ENCODE measurements at regions of chr1 and their contacts with region 1.

Region 1: GRCh38 chr1:109532365-109533136 is 7.1 kb upstream of the GPR61 start:
- DNase-seq: peak; percentile 93
- ATAC-seq: peak; percentile 93
- H3K4me3 Mint-ChIP-seq: peak overlapping the region; percentile 57
- H3K27ac Mint-ChIP-seq: peak overlapping the region; percentile 90
- H3K4me1 Mint-ChIP-seq: peaks cover 23% of the 10 kb centered on the region
- H3K27me3 Mint-ChIP-seq: no peaks in the 10 kb centered on the region
- CTCF ChIP-seq: peak; percentile 79

Region 2: DNA sequence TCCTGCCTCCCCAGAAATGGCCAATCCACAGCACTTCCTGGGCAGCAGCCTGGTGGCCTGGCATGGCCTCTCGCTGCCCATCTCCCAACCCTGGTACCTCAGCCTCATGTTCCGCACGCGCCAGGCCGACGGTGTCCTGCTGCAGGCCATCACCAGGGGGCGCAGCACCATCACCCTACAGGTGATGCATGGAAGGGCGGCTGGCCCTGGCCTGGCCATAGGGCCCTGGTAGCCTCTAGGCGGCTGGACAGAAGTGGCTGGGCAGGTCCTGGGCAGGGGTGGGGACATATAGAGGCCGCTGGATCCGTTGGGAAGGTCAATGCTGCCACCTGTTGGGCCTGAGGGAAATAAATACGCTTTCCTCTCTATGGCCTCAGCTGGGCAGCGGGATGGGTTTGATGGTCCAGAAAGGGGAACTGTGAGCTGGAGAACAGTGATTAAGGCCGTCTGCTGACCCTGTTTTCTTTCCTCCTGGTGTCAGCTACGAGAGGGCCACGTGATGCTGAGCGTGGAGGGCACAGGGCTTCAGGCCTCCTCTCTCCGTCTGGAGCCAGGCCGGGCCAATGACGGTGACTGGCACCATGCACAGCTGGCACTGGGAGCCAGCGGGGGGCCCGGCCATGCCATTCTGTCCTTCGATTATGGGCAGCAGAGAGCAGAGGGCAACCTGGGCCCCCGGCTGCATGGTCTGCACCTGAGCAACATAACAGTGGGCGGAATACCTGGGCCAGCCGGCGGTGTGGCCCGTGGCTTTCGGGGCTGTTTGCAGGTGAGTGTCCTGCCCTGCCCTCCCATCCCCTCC is 268.8 kb before region 1 on chr1:
- CTCF ChIA-PET with region 1: interaction called, 17 read pairs
- POLR2A ChIA-PET with region 1: no interaction called
- intact Hi-C with region 1: loop called (anchors 5 kb)
- DNase-seq: peak; percentile 89
- ATAC-seq: peak; percentile 99
- H3K4me3 Mint-ChIP-seq: peak overlapping the region; percentile 12
- H3K27ac Mint-ChIP-seq: peak overlapping the region; percentile 76
- H3K4me1 Mint-ChIP-seq: peaks cover 2% of the 10 kb centered on the region
- H3K27me3 Mint-ChIP-seq: no peaks in the 10 kb centered on the region
- CTCF ChIP-seq: peak; percentile 97

Region 3: DNA sequence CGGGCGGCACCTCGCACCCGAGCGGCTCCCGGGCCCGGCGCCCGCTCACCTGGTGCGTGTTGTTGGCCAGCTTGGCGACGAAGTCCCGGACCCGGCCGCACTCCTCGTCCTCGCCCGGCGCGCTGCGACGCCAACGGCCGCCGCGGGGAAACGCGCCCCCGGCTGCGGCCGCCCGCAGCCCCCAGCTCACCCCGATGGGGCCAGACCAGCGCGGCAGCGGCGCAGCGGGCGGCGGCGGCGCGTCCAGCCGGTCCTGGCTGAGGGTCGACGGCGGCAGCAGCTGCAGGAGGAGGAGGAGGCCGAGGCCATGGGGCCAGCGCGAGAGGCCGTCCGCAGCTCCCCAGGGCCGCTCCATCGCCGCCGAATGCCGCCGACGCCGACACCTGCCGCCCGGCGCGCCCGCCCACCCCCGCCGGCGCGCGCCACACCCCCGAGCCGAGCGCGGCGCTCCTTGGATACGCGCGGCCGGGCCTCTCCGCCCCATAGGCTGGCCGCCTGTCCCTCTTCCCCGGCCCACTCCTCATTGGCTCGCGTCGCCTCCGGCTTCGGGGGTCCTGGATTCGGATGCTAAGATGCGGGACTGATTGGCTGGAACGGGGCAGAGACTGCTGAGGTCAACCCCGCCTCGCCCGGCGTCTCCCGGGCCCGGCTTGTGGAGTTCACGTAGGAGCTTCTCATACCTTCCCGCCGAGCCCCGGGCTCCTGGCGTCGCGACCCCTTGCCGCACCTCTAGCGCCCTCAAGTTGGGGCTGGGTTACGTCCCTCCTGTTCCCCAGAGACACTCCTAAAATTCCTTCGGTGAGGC is 134.8 kb before region 1 on chr1 and contains the start of gene SORT1:
- CTCF ChIA-PET with region 1: interaction called, 59 read pairs
- POLR2A ChIA-PET with region 1: interaction called, 3 read pairs
- intact Hi-C with region 1: no loop called
- DNase-seq: peak; percentile 80
- ATAC-seq: peak; percentile 99
- H3K4me3 Mint-ChIP-seq: peak within 1 kb of the TSS; percentile 77
- H3K27ac Mint-ChIP-seq: no peak within 1 kb of the TSS
- H3K4me1 Mint-ChIP-seq: peaks cover 8% of the 10 kb centered on the region
- H3K27me3 Mint-ChIP-seq: peaks cover 33% of the 10 kb centered on the region
- CTCF ChIP-seq: no peak
- total RNA-seq, gene SORT1: 2.5 to 3.2 TPM

Region 4: DNA sequence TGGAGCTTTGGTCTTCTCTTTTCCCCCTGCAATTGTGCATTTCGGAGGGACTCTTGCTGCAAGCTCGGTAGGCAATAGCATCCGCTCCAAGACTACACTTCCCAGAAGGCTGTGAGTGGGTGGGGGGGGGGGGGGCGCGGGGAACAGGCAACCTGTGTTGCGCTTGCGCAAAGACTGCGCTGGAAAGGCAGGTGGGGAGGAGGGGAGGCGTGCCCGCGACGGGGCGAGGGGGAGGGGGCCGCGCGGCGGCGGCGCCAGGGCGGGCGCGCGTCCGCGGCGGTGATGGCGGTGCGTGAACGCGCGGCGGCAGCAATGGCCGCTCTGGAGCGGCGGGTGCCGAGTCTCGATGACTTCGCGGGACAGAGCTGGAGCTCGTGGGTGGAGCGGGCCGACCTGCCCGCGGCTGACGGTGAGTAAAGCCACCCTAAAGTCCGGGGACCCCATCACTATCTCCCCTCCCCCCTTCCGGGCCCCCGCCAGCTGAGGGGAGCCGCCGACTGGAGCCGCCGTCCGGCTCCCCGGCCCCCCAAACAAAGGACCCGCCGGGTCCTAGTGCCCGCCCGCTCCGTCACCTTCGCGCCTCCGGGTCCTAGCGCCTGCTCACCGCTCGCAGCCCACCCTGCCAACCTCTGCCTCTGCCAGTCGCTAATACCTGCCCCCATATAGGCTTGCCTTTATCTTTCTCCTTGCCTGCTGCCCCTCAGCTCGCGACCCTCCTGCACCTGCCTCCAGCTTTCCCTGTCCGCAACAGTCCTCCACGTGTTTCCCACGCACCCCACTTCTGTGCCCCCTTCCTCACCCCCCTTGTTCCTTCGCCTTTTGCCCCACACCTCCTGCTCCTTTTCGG is 48.7 kb before region 1 on chr1 and contains the start of gene ATXN7L2:
- CTCF ChIA-PET with region 1: interaction called, 1,390 read pairs
- POLR2A ChIA-PET with region 1: interaction called, 16 read pairs
- intact Hi-C with region 1: no loop called
- DNase-seq: peak; percentile 90
- ATAC-seq: peak; percentile 81
- H3K4me3 Mint-ChIP-seq: peak within 1 kb of the TSS; percentile 91
- H3K27ac Mint-ChIP-seq: peak within 1 kb of the TSS; percentile 94
- H3K4me1 Mint-ChIP-seq: peaks cover 30% of the 10 kb centered on the region
- H3K27me3 Mint-ChIP-seq: peaks cover 1% of the 10 kb centered on the region
- CTCF ChIP-seq: no peak
- total RNA-seq, gene ATXN7L2: 11.2 to 13.7 TPM

Region 5: GRCh38 chr1:109509176-109510134 is 23.1 kb before region 1 on chr1 and contains the start of gene AMIGO1:
- CTCF ChIA-PET with region 1: interaction called, 1,390 read pairs
- POLR2A ChIA-PET with region 1: interaction called, 15 read pairs
- intact Hi-C with region 1: no loop called
- DNase-seq: peak; percentile 71
- ATAC-seq: peak; percentile 71
- H3K4me3 Mint-ChIP-seq: peak within 1 kb of the TSS; percentile 78
- H3K27ac Mint-ChIP-seq: peak within 1 kb of the TSS; percentile 84
- H3K4me1 Mint-ChIP-seq: peaks cover 53% of the 10 kb centered on the region
- H3K27me3 Mint-ChIP-seq: no peaks in the 10 kb centered on the region
- CTCF ChIP-seq: no peak
- total RNA-seq, gene AMIGO1: 1.3 to 1.7 TPM

Region 6: GRCh38 chr1:109570417-109570827 is 37.9 kb after region 1 on chr1:
- CTCF ChIA-PET with region 1: interaction called, 14 read pairs
- POLR2A ChIA-PET with region 1: no interaction called
- intact Hi-C with region 1: no loop called
- DNase-seq: no peak
- ATAC-seq: no peak
- H3K4me3 Mint-ChIP-seq: no peak overlapping the region
- H3K27ac Mint-ChIP-seq: no peak overlapping the region
- H3K4me1 Mint-ChIP-seq: peaks cover 31% of the 10 kb centered on the region
- H3K27me3 Mint-ChIP-seq: no peaks in the 10 kb centered on the region
- CTCF ChIP-seq: no peak